ENCODE measurements at regions of chr3 and their contacts with region 1.

Region 1: GRCh38 chr3:37986479-37987314 is 3.9 kb upstream of the VILL start:
- DNase-seq: no peak
- H3K4me3 ChIP-seq: no peak overlapping the region
- H3K27me3 ChIP-seq: no peaks in the 10 kb centered on the region
- CTCF ChIP-seq: no peak

Region 2: GRCh38 chr3:37974121-37975083 is 12.3 kb before region 1 on chr3:
- CTCF ChIA-PET with region 1: interaction called, 32 read pairs
- POLR2A ChIA-PET with region 1: interaction called, 4 read pairs
- DNase-seq: no peak
- H3K4me3 ChIP-seq: no peak overlapping the region
- H3K27me3 ChIP-seq: no peaks in the 10 kb centered on the region
- CTCF ChIP-seq: peak; percentile 79

Measured in BJ (cell line).